Endothelial cell of umbilical vein (primary cell): ENCODE measurements at regions of chr14 and their contacts with region 1.

Region 1: GRCh38 chr14:94036313-94037050 is 10.3 kb downstream of the OTUB2 start:
- DNase-seq: peak; percentile 69
- H3K4me3 ChIP-seq: no peak overlapping the region
- H3K27ac ChIP-seq: no peak overlapping the region
- H3K4me1 ChIP-seq: no peaks in the 10 kb centered on the region
- H3K27me3 ChIP-seq: no peaks in the 10 kb centered on the region
- CTCF ChIP-seq: peak; percentile 83 to 87
- POLR2A ChIP-seq: no peak

Region 2: GRCh38 chr14:94021001-94021400 is 15.5 kb before region 1 on chr14:
- CTCF ChIA-PET with region 1: interaction called, 16 read pairs
- POLR2A ChIA-PET with region 1: no interaction called
- dilution Hi-C with region 1: no loop called
- intact Hi-C with region 1: no loop called
- DNase-seq: no peak
- H3K4me3 ChIP-seq: no peak overlapping the region
- H3K27ac ChIP-seq: no peak overlapping the region
- H3K4me1 ChIP-seq: no peaks in the 10 kb centered on the region
- H3K27me3 ChIP-seq: peaks cover 0 to 8% of the 10 kb centered on the region in 2 experiments
- CTCF ChIP-seq: no peak
- POLR2A ChIP-seq: no peak

Region 3: DNA sequence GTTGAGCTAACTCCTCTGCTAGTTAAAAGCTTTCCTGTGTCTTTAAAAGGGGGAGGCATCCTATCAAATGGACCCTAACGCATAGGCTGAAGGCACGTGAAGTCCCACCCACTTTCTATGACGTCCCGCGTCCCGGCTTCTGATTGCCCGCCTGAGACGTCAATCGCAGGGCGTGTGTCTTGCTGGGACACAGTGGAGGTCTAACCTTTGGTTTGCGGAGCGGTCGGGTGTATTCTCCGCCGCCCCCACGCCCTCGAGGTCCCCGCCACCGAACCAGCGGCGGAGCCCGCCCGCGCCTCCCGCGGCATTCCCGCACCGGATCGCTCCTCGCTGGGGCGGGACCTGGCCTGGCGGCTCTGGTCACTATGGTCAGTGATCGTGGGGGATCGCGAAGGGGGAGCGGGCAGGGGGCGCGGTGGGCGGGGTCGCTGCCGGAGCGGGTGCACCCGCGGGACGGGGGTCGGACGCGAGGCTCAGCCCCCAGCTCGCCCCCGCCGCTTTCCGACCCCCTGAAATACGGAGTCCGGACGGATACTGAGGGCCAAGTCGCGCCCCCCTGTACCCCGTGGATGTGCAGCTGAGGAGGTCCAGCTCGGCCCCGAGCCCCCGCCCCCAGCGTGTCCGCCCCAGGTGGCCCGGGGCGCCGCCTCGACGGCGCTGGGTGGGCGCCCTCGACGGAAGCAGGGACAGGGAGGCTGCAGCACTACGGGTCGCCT is 10.2 kb before region 1 on chr14 and contains the start of gene OTUB2:
- CTCF ChIA-PET with region 1: interaction called, 17 read pairs
- POLR2A ChIA-PET with region 1: no interaction called
- dilution Hi-C with region 1: no loop called
- intact Hi-C with region 1: no loop called
- DNase-seq: peak; percentile 99
- H3K4me3 ChIP-seq: peak within 1 kb of the TSS in 2 of 3 experiments; percentile 29 to 50
- H3K27ac ChIP-seq: no peak within 1 kb of the TSS
- H3K4me1 ChIP-seq: peaks cover 10% of the 10 kb centered on the region
- H3K27me3 ChIP-seq: peaks cover 0 to 4% of the 10 kb centered on the region in 2 experiments
- CTCF ChIP-seq: no peak
- POLR2A ChIP-seq: no peak
- total RNA-seq, gene OTUB2: 1.1 and 1.6 TPM in 2 replicates

Region 4: DNA sequence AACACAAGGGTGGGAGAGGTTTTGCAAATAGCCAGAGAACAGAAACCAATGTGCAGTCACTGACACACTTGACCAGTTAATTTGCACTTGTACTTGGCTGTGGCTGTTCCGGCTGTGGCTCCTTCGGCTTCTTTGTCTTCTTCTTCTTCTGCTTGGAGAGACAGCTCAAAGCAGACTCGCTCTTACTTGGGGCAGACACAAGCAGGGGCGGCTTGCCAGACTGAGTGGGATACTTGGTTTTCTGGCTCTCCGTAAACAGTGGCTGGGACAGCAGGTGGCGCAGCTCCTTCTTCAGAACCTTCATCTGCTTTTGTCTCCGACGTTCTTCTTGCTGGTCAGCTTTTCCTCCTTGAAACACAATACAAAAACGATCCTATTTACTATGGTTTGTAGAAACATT is 14.6 kb after region 1 on chr14:
- CTCF ChIA-PET with region 1: interaction called, 24 read pairs
- POLR2A ChIA-PET with region 1: no interaction called
- dilution Hi-C with region 1: no loop called
- intact Hi-C with region 1: no loop called
- DNase-seq: peak; percentile 40
- H3K4me3 ChIP-seq: no peak overlapping the region
- H3K27ac ChIP-seq: no peak overlapping the region
- H3K4me1 ChIP-seq: peaks cover 3% of the 10 kb centered on the region
- H3K27me3 ChIP-seq: no peaks in the 10 kb centered on the region
- CTCF ChIP-seq: peak in 1 of 2 donors; percentile 59
- POLR2A ChIP-seq: no peak

Region 5: GRCh38 chr14:94080471-94081289 is 44.2 kb after region 1 on chr14 and contains the start of gene DDX24:
- CTCF ChIA-PET with region 1: interaction called, 16 read pairs
- POLR2A ChIA-PET with region 1: no interaction called
- dilution Hi-C with region 1: no loop called
- intact Hi-C with region 1: no loop called
- DNase-seq: peak; percentile 97
- H3K4me3 ChIP-seq: peak within 1 kb of the TSS; percentile 67 to 88 (median 82)
- H3K27ac ChIP-seq: peak within 1 kb of the TSS; percentile 80
- H3K4me1 ChIP-seq: peaks cover 29% of the 10 kb centered on the region
- H3K27me3 ChIP-seq: no peaks in the 10 kb centered on the region
- CTCF ChIP-seq: no peak
- POLR2A ChIP-seq: peak; percentile 95
- total RNA-seq, gene DDX24: 132 and 141 TPM in 2 replicates

Region 6: GRCh38 chr14:94143239-94143638 is 106.8 kb after region 1 on chr14:
- CTCF ChIA-PET with region 1: interaction called, 347 read pairs
- POLR2A ChIA-PET with region 1: no interaction called
- dilution Hi-C with region 1: no loop called
- intact Hi-C with region 1: no loop called
- DNase-seq: no peak
- H3K4me3 ChIP-seq: no peak overlapping the region
- H3K27ac ChIP-seq: no peak overlapping the region
- H3K4me1 ChIP-seq: no peaks in the 10 kb centered on the region
- H3K27me3 ChIP-seq: no peaks in the 10 kb centered on the region
- CTCF ChIP-seq: peak in 1 of 2 donors; percentile 23
- POLR2A ChIP-seq: no peak

Region 7: GRCh38 chr14:94180655-94181271 is 144.3 kb after region 1 on chr14:
- CTCF ChIA-PET with region 1: interaction called, 14 read pairs
- POLR2A ChIA-PET with region 1: no interaction called
- dilution Hi-C with region 1: no loop called
- intact Hi-C with region 1: loop called (anchors 1 kb)
- DNase-seq: peak; percentile 48
- H3K4me3 ChIP-seq: no peak overlapping the region
- H3K27ac ChIP-seq: no peak overlapping the region
- H3K4me1 ChIP-seq: no peaks in the 10 kb centered on the region
- H3K27me3 ChIP-seq: peaks cover 22 to 54% of the 10 kb centered on the region in 2 experiments
- CTCF ChIP-seq: peak; percentile 30 to 40
- POLR2A ChIP-seq: no peak

Region 8: DNA sequence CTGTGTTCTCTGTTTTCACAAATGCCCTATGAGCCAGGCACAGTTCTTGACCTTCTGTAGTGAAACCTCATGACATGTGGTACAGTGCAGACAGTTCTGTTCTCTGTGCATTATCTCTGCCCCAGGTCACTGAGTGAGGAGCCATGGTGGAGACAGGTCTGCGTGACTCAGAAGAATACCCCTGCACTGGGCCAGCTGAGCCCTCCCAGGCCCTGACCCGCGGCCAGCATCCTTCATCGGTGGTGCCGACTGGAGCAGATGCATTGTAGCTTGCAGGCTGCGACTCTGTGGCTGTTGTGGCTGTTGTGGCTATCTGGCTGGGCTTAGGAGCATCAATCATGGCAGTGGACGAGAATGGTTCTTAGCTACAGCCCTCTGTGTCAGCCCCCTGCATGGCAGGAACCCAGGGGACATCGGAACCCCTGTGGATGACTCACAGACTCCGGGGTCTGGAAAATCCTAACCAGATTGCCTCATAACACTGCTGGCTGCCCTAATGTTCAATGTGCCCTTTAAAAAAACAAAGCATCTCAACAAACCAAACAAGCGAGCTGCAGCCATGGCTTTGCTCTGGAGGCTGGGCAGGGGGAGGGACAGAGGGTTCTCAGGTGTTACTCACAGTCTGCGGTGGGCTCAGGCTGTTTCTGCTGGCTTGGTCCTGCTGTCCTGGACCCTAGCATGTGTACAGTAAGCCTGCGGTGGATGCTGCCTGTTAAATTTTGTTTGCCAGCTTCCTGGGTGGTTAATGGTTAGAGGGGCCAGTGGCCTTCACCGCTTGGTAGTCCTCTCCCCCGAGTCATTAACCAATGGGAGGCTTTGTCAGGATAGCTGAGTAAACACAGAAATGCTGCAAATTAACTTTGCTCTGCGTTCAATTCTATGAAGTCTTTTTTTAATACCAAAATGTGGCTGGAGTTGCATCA is 286.4 kb after region 1 on chr14 and contains the start of gene SERPINA6:
- CTCF ChIA-PET with region 1: no interaction called
- POLR2A ChIA-PET with region 1: no interaction called
- dilution Hi-C with region 1: no loop called
- intact Hi-C with region 1: no loop called
- DNase-seq: no peak
- H3K4me3 ChIP-seq: no peak within 1 kb of the TSS
- H3K27ac ChIP-seq: no peak within 1 kb of the TSS
- H3K4me1 ChIP-seq: no peaks in the 10 kb centered on the region
- H3K27me3 ChIP-seq: no peaks in the 10 kb centered on the region
- CTCF ChIP-seq: no peak
- POLR2A ChIP-seq: no peak
- total RNA-seq, gene SERPINA6: not detected in 2 replicates